ENCODE measurements at regions of chr2 and their contacts with region 1.

Region 1: DNA sequence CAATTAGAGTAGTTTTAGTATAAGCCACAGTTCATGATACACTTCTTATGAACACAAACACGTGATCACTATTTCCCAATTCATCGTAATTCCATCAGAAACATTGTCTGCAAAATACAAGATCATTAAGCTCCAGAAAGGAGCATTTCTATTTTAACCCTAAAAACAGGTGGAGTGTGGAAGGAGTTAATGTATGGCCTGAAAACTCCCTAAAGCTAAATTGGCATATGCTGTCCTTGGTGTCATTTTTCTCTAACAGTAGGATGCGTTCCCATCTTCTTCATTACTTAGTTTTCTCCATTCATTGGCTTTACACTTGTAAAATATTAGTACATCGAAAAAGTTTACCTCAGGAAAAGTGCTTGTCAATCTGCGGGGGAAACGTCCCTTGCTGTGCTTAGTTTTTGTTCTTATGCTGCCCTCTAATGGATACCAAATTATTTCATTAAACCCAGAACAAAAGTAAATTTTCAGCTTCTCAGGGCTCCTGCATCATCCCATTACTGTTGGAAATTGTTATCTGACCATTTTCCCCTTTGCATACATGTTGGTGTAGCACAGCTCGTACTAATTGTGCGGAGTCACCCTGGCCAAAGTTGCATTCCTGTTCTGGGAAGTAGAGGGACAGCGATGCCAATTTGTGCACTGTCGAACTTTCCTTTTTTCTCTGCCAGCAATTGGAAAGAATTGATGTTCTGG is 153.4 kb downstream of the GPD2 start:
- DNase-seq: peak in 2 of 4 experiments; percentile 58 to 64
- ATAC-seq: peak; percentile 91
- H3K4me3 ChIP-seq: no peak overlapping the region
- H3K27ac ChIP-seq: no peak overlapping the region
- H3K4me1 ChIP-seq: no peaks in the 10 kb centered on the region
- H3K27me3 ChIP-seq: no peaks in the 10 kb centered on the region
- CTCF ChIP-seq: peak; percentile 38 to 78 (median 61); a peak in 5 of 6 replicates
- EP300 ChIP-seq: no peak
- POLR2A ChIP-seq: no peak
- RAD21 ChIP-seq: peak; percentile 94 to 95

Region 2: GRCh38 chr2:156065905-156066304 is 523.6 kb before region 1 on chr2:
- CTCF ChIA-PET with region 1: no interaction called
- POLR2A ChIA-PET with region 1: no interaction called
- in situ Hi-C with region 1: no loop called
- intact Hi-C with region 1: loop called (anchors 2 kb)
- DNase-seq: peak in 2 of 4 experiments; percentile 22 to 37
- ATAC-seq: peak; percentile 54; the same call in 2 of the 3 replicates
- H3K4me3 ChIP-seq: no peak overlapping the region
- H3K27ac ChIP-seq: no peak overlapping the region
- H3K4me1 ChIP-seq: no peaks in the 10 kb centered on the region
- H3K27me3 ChIP-seq: no peaks in the 10 kb centered on the region
- CTCF ChIP-seq: peak; percentile 22 to 50 (median 45); a peak in 4 of 6 replicates
- EP300 ChIP-seq: no peak
- POLR2A ChIP-seq: no peak
- RAD21 ChIP-seq: peak; percentile 33 to 78

Region 3: GRCh38 chr2:156206355-156206754 is 383.2 kb before region 1 on chr2:
- CTCF ChIA-PET with region 1: no interaction called
- POLR2A ChIA-PET with region 1: no interaction called
- in situ Hi-C with region 1: no loop called
- intact Hi-C with region 1: loop called (anchors 5 kb)
- DNase-seq: no peak
- ATAC-seq: no peak
- H3K4me3 ChIP-seq: no peak overlapping the region
- H3K27ac ChIP-seq: no peak overlapping the region
- H3K4me1 ChIP-seq: no peaks in the 10 kb centered on the region
- H3K27me3 ChIP-seq: no peaks in the 10 kb centered on the region
- CTCF ChIP-seq: no peak
- EP300 ChIP-seq: no peak
- POLR2A ChIP-seq: no peak
- RAD21 ChIP-seq: no peak; a peak in 1 of 4 replicates

Region 4: DNA sequence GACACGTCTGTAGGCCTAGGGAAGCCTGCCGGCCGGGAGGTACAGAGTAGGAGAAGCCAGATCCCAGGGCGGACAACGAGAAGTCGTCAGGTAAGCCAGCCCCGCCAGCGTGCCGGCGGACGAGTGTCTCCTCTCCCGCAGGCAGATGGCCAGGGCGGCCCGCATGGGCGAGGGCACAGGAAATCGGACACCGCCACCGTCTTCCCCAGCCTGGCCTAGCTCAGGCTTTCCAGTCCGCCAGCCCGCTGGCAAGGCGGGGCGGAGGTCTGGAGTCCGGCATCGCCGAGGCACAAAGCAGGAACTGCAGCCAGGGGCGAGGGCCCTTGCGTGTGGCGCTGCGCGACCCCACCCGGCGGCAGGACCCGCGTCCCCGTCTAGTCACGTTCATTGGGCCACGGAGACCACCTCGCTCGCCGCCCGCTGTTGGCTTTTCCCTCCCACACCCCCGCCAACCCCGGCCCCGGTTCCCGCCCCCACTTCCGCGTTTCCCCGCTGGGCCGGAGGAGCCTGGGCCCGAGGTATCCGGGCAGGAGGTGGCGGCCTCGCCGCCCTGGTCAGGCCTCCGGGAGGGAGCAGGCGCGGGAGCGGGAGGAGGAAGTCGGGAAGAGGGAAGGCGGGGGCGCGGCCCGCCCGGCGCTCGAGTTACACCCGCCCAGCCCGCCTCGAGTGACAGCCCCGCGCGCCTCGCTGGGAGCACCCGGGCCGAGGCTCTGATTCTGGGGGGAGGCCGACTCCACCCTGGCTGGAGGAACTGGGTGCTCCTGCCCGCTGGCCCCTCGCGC is 153.6 kb before region 1 on chr2 and contains the start of gene GPD2:
- CTCF ChIA-PET with region 1: no interaction called
- POLR2A ChIA-PET with region 1: no interaction called
- in situ Hi-C with region 1: no loop called
- intact Hi-C with region 1: loop called (anchors 10 kb)
- DNase-seq: peak; percentile 78 to 81 (median 80)
- ATAC-seq: peak; percentile 89
- H3K4me3 ChIP-seq: peak within 1 kb of the TSS; percentile 49
- H3K27ac ChIP-seq: peak within 1 kb of the TSS; percentile 41
- H3K4me1 ChIP-seq: peaks cover 7 to 12% of the 10 kb centered on the region in 2 experiments
- H3K27me3 ChIP-seq: no peaks in the 10 kb centered on the region
- CTCF ChIP-seq: no peak
- EP300 ChIP-seq: no peak
- POLR2A ChIP-seq: peak; percentile 74
- RAD21 ChIP-seq: no peak
- polyA plus RNA-seq, gene GPD2: 5.2 to 6.0 TPM

Region 5: DNA sequence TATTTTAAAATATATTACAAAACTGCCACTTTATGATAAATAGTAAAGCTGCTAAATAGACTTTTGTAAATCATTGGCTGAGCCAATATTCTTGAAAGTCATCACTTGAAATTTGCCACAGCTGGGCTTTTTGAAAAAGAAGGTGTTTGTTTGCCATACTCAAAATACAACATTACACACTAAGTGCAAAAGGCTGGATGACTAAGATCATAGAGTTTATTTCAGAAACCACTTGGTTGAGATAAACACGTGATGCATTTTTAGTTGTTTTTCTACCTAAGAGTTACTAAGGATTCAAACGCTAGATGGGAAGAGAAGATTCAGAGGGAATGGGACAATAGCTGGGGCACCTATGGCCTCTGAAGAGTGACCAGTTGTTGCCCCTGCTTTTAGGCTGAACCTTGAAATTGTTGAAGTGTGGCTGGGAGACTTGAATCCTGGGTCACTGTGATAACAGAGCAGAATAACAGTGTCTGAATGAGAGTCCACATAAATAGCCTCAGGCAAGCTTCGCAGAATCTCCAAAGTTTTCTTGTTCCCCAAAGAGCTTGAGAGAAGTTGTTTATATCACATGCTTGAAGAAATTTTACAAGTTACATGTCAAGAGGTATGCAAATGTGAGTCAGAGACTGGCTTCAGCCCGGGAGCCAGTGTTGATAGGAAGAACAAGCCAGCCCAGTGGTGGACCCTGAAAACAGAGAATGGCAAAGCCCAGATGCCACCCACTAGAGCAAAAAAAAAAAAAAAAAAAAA is 256.5 kb after region 1 on chr2:
- CTCF ChIA-PET with region 1: no interaction called
- POLR2A ChIA-PET with region 1: no interaction called
- in situ Hi-C with region 1: no loop called
- intact Hi-C with region 1: no loop called
- DNase-seq: no peak
- ATAC-seq: no peak
- H3K4me3 ChIP-seq: no peak overlapping the region
- H3K27ac ChIP-seq: 0 out of 3 replicates have a peak overlapping the region, but pooled peaks have one; percentile 20
- H3K4me1 ChIP-seq: no peaks in the 10 kb centered on the region
- H3K27me3 ChIP-seq: no peaks in the 10 kb centered on the region
- CTCF ChIP-seq: no peak
- EP300 ChIP-seq: no peak
- POLR2A ChIP-seq: no peak
- RAD21 ChIP-seq: no peak

Region 6: GRCh38 chr2:157055660-157056199 is 466.2 kb after region 1 on chr2:
- CTCF ChIA-PET with region 1: no interaction called
- POLR2A ChIA-PET with region 1: no interaction called
- in situ Hi-C with region 1: no loop called
- intact Hi-C with region 1: loop called (anchors 2 kb)
- DNase-seq: peak in 2 of 4 experiments; percentile 9 to 29
- ATAC-seq: 0 out of 3 replicates have a peak, but pooled peaks have one; percentile 57
- H3K4me3 ChIP-seq: no peak overlapping the region
- H3K27ac ChIP-seq: no peak overlapping the region
- H3K4me1 ChIP-seq: no peaks in the 10 kb centered on the region
- H3K27me3 ChIP-seq: no peaks in the 10 kb centered on the region
- CTCF ChIP-seq: peak in 2 of 3 experiments; percentile 14 to 64; a peak in 3 of 6 replicates
- EP300 ChIP-seq: no peak
- POLR2A ChIP-seq: no peak
- RAD21 ChIP-seq: peak; percentile 45 to 72

Measured in K562 (cell line).